T-cell (primary cell): ENCODE measurements at regions of chr3 and their contacts with region 1.

Region 1: GRCh38 chr3:29537889-29538609 is 257.2 kb downstream of the RBMS3 start:
- DNase-seq: no peak
- ATAC-seq: no peak
- H3K4me3 ChIP-seq: no peak overlapping the region
- H3K4me3 Mint-ChIP-seq: no peak overlapping the region
- H3K27ac ChIP-seq: no peak overlapping the region
- H3K27ac Mint-ChIP-seq: no peak overlapping the region
- H3K4me1 ChIP-seq: no peaks in the 10 kb centered on the region
- H3K4me1 Mint-ChIP-seq: no peaks in the 10 kb centered on the region
- H3K27me3 ChIP-seq: no peaks in the 10 kb centered on the region
- H3K27me3 Mint-ChIP-seq: no peaks in the 10 kb centered on the region

Region 2: DNA sequence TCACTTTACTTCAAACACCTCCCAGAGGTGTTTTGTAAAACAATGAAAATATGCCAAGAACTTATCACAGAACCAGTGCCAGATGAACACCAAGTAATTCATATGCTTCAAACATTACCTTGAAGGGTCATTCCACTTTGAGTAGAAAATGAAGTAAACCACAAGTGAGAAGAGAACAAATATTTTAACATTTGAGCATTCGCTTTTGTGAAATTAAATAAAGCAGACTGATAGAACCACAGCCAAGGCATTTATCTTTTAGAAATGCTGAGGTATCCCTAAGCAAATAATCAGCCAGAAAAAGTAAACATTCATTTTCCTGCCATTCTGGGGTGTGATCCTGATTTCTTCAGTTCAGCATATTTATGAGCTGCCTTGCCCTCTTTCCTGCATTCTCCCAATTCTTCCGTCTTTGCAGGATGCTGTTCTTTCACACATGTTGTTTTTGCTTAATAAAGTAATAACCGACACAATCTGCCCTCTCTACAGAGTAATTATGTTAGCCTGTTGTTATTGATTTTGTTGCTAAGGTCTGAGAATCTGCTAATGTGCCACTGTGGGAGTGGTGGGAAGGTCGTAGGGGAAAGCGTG is 832.7 kb after region 1 on chr3:
- CTCF ChIA-PET with region 1: no interaction called
- POLR2A ChIA-PET with region 1: interaction called in 1 of 2 experiments, 17 read pairs
- DNase-seq: no peak
- ATAC-seq: no peak
- H3K4me3 ChIP-seq: no peak overlapping the region
- H3K4me3 Mint-ChIP-seq: no peak overlapping the region
- H3K27ac ChIP-seq: no peak overlapping the region
- H3K27ac Mint-ChIP-seq: no peak overlapping the region
- H3K4me1 ChIP-seq: no peaks in the 10 kb centered on the region
- H3K4me1 Mint-ChIP-seq: peaks cover 0 to 22% (median 0%) of the 10 kb centered on the region in 3 donors
- H3K27me3 ChIP-seq: no peaks in the 10 kb centered on the region
- H3K27me3 Mint-ChIP-seq: peaks cover 4% of the 10 kb centered on the region in 2 donors